HEK293 (cell line): ENCODE measurements at regions of chr7 and their contacts with region 1.

Region 1: DNA sequence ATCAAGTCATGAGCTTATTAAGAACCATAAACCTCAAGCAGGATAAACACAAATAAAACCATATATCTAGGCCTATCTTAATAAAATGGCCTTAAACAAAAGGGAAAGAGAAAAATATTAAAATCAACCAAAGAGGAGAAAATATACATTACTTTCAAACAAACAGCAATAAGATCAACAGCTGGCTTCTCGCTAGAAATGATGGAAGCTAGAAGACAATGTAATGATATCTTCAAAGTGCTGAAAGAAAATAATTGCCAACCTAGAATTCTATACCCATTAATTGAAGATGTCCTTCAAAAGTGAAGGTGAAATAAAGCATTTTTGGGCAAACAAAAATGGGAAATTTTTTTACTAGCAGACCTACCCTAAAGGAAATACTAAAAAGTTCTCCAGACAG is 142.9 kb upstream of the PODXL start:
- H3K4me3 ChIP-seq: no peak overlapping the region
- H3K27ac ChIP-seq: no peak overlapping the region
- H3K4me1 ChIP-seq: no peaks in the 10 kb centered on the region
- CTCF ChIP-seq: no peak

Region 2: DNA sequence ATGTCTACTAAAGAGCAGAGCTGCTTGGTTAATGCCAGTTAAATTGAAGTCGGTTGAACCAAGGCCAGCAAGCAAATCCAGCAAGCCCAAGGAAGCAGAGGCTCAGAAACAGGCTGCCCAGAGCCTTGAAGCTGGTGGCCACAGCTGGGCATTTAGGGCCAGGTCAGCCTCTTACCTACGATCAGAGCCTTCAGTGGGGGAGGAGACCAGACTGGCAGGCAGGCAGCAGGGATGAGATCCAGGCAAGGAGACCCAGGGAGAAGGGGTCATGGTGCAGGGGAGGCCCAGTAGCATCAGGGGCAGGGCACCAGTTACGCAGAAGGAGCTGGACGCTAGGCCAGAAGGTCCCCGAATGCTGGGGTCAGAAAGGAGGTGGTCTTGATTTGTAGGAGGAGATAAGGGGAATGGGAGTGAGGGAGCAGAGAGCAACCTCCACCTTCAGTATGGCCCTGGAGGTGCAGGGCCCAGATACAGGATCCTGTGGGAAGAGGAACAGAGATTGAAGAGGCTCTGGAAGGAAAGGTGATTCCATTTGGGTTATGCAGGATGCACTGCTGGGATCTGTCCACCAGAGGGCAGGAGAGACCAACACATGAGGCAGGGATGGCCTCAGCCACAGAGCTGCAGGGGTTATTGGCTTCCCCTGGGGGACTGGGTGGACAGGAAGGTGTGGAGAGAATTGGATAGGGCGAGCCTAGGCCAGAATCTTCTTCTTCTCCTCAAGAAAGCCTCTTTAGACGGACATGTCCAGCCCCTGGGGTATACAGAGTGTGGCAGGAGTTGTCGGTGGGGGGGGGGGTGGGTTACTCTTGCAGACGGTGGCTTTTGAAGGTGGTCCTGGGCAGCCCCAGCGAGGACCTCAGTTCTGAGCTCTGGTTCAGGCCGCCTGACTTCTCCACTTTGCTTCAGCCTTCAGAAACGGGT is 10.3 kb before region 1 on chr7:
- CTCF ChIA-PET with region 1: interaction called, 11 read pairs
- POLR2A ChIA-PET with region 1: no interaction called
- H3K4me3 ChIP-seq: no peak overlapping the region
- H3K27ac ChIP-seq: no peak overlapping the region
- H3K4me1 ChIP-seq: no peaks in the 10 kb centered on the region
- CTCF ChIP-seq: peak; percentile 94

Region 3: GRCh38 chr7:131961054-131961680 is 261.8 kb after region 1 on chr7:
- CTCF ChIA-PET with region 1: no interaction called
- POLR2A ChIA-PET with region 1: no interaction called
- H3K4me3 ChIP-seq: no peak overlapping the region
- H3K27ac ChIP-seq: no peak overlapping the region
- H3K4me1 ChIP-seq: no peaks in the 10 kb centered on the region
- CTCF ChIP-seq: no peak